Psoas muscle (tissue), 8 donors: ENCODE measurements at regions of chrX and their contacts with region 1.

Region 1: GRCh38 chrX:15749642-15750610 is 11.9 kb downstream of the CA5B start:
- DNase-seq: no peak
- ATAC-seq: no peak
- H3K4me3 ChIP-seq: no peak overlapping the region
- H3K27ac ChIP-seq: no peak overlapping the region
- H3K4me1 ChIP-seq: no peaks in the 10 kb centered on the region
- H3K27me3 ChIP-seq: no peaks in the 10 kb centered on the region
- CTCF ChIP-seq: no peak

Region 2: DNA sequence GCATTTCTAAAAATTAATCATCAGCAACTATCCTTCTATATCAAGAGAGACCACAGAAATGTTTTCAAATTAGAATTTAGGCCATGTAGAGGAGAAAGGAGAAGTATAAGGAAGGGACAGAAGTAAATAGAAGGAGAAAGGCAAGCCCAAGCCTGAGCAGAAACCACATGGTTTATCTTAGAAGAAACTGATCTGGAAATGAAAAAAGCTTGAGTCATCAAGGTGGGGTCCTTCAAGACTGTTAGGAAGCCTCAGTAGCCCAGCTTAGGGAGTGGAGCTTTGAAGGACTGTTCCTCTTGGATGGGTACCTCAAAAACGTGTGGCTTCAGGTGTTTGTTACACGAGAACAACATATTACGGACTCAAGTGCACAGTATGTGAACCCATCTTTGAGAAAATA is 244.8 kb before region 1 on chrX:
- intact Hi-C with region 1: no loop called
- DNase-seq: no peak
- ATAC-seq: no peak
- H3K4me3 ChIP-seq: no peak overlapping the region
- H3K27ac ChIP-seq: no peak overlapping the region
- H3K4me1 ChIP-seq: no peaks in the 10 kb centered on the region
- H3K27me3 ChIP-seq: peaks cover 0 to 16% (median 0%) of the 10 kb centered on the region in 3 donors
- CTCF ChIP-seq: no peak

Region 3: GRCh38 chrX:16205840-16206239 is 455.9 kb after region 1 on chrX:
- intact Hi-C with region 1: no loop called
- DNase-seq: no peak
- ATAC-seq: no peak
- H3K4me3 ChIP-seq: no peak overlapping the region
- H3K27ac ChIP-seq: no peak overlapping the region
- H3K4me1 ChIP-seq: no peaks in the 10 kb centered on the region
- H3K27me3 ChIP-seq: peaks cover 0 to 7% (median 0%) of the 10 kb centered on the region in 3 donors
- CTCF ChIP-seq: no peak

Region 4: DNA sequence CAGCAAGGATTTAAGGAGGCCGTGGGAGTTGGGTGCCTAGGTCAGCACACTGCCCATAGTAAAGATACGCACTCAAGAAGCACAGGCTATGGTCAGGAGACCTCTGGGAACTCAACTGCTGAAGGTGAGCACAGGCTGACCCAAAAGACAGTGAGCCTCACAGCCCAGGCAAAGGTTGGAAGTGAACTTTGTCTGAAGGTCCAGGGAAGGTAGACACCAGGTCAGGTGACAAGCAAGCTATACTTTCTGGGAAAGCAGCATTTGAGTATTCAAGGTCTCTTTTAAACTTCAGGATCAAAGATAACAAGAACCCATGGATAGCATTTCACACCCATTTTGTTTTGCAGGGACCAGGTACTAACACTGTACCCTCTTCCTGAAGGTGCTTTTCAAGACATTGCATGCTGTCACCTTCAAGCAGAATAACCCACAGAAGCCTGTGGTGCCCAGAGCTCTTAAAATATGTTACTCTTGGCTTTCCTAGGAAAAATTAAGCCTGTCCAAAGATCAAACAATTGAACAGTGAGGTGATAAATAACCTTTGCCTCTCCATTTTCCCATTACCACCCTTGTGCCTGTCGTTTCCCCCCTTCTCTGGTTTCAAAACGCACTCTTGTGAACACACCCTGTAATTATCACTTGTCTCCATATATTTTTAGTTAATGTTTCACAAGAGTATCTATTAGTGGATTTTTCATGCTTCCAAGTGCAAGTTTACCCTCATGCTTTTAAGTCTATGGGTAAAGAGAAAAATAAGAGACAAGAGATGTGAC is 896.6 kb after region 1 on chrX:
- intact Hi-C with region 1: loop called in 1 of 2 experiments (anchors 5 kb)
- DNase-seq: no peak
- ATAC-seq: no peak
- H3K4me3 ChIP-seq: no peak overlapping the region
- H3K27ac ChIP-seq: no peak overlapping the region
- H3K4me1 ChIP-seq: no peaks in the 10 kb centered on the region
- H3K27me3 ChIP-seq: peaks cover 0 to 10% (median 0%) of the 10 kb centered on the region in 3 donors
- CTCF ChIP-seq: no peak